Common myeloid progenitor, CD34-positive (primary cell): ENCODE measurements at regions of chr1 and their contacts with region 1.

Region 1: DNA sequence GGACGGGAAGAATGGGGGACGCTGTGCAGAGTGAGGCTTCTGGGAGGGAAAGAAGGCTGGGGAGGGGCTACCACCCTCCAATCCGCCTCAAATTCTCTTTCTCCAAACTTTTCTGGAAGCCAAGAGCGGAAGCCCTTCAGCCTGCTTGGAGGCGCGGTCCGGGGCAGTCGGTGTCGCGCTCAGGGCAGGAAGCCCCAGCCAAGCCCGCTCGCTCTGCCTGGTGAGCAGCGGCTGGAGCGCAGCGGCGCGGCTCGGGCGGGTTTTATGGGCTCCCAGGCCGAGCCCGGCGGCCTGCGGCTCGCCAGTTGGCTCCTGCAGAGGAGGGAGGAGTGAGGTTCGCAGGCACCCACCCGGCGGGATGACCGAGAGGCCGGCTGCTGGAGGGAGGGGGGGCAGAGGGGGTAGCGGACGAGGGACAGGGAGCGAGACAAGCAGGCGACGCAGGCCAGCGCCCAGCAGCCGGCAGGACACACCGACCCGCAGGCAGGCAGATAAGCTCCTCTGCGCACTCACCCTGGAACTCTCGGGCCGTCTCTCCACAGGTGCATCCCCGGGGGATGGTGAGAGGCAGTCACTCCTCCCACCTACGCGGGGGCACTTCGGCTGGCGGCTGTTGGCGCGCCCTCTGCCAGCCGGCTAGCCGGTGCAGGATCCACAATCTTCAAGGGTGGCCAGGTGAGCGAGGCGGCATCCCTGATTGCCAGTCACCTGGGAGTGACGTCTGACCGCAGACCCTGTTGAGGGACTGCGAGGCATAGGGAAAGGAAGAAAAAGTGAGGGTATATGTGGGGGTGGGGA is at the start of gene AVPR1B:
- DNase-seq: peak in 2 of 3 donors; percentile 78 to 90
- H3K4me3 ChIP-seq: peak within 1 kb of the TSS; percentile 33 to 81 (median 59)
- H3K27ac ChIP-seq: no peak within 1 kb of the TSS
- H3K4me1 ChIP-seq: peaks cover 6 to 57% (median 39%) of the 10 kb centered on the region in 4 experiments
- H3K27me3 ChIP-seq: peaks cover 0 to 5% (median 0%) of the 10 kb centered on the region in 5 experiments

Region 2: DNA sequence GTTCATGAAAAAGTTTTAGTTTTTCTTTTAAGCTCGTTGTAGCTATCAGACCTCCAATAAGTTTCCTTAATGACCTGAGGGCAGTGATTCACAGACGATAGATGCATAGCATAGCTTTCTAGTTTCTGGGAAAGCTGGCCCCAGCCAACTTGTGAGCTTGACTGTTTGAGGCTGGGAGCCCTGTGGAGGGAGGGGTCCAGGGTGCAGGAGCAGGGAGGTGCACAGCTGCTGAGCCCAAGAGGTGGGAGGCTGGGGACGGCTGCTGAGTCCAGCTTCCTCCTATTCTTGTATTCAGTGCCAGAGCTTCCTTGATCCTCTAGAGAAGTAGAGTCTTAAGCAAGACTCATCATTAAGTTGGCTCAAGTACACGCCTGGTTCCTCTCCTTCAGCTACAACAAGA is 10.8 kb after region 1 on chr1:
- CTCF ChIA-PET with region 1: interaction called, 10 read pairs
- POLR2A ChIA-PET with region 1: no interaction called
- DNase-seq: no peak
- H3K4me3 ChIP-seq: no peak overlapping the region
- H3K27ac ChIP-seq: no peak overlapping the region
- H3K4me1 ChIP-seq: no peaks in the 10 kb centered on the region
- H3K27me3 ChIP-seq: peaks cover 0 to 2% (median 0%) of the 10 kb centered on the region in 5 experiments